ENCODE measurements at regions of chr20 and their contacts with region 1.

Region 1: GRCh38 chr20:17617551-17618223 is 47.8 kb downstream of the DSTN start:
- DNase-seq: peak; percentile 56 to 69 (median 64)
- ATAC-seq: peak; percentile 91
- H3K4me3 ChIP-seq: no peak overlapping the region
- H3K27ac ChIP-seq: no peak overlapping the region
- H3K4me1 ChIP-seq: peaks cover 0 to 20% of the 10 kb centered on the region in 2 experiments; a peak in 2 of 5 replicates
- H3K27me3 ChIP-seq: no peaks in the 10 kb centered on the region
- CTCF ChIP-seq: peak; percentile 63 to 71 (median 68)
- EP300 ChIP-seq: no peak
- POLR2A ChIP-seq: no peak
- RAD21 ChIP-seq: peak; percentile 69 to 82

Region 2: DNA sequence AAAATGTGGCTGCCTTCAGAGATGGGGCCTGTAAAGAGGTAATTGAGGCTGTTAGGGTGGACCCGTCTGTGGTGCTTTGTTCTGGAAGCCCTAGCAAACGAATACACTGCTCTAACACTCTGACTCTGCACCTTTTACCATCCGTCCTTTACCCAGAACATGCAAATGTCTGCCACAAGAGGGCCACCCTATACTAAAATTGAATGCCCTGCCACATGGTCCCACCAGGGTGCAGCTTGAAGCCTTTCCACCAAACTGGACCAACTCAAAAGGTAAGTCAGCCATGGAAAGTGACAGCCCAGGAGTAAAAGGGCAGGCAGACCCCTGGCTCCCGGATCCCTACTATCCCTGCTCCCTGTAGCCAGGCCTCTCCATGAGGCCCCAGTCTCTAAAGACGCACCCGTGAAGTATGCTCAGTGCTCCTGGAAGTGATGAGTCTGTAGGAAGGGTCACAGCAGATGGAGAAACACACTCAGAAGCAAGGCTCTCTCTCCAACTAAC is 80.7 kb before region 1 on chr20:
- CTCF ChIA-PET with region 1: interaction called, 23 read pairs
- POLR2A ChIA-PET with region 1: interaction called, 5 read pairs
- in situ Hi-C with region 1: loop called (anchors 5 kb)
- intact Hi-C with region 1: loop called (anchors 1 kb)
- DNase-seq: peak; percentile 68 to 77 (median 72)
- ATAC-seq: peak; percentile 99
- H3K4me3 ChIP-seq: no peak overlapping the region
- H3K27ac ChIP-seq: no peak overlapping the region
- H3K4me1 ChIP-seq: no peaks in the 10 kb centered on the region
- H3K27me3 ChIP-seq: no peaks in the 10 kb centered on the region
- CTCF ChIP-seq: peak; percentile 87 to 98 (median 94)
- EP300 ChIP-seq: no peak
- POLR2A ChIP-seq: no peak
- RAD21 ChIP-seq: peak; percentile 83 to 94

Measured in K562 (cell line).